ENCODE measurements at regions of chr1 and their contacts with region 1.

Region 1: DNA sequence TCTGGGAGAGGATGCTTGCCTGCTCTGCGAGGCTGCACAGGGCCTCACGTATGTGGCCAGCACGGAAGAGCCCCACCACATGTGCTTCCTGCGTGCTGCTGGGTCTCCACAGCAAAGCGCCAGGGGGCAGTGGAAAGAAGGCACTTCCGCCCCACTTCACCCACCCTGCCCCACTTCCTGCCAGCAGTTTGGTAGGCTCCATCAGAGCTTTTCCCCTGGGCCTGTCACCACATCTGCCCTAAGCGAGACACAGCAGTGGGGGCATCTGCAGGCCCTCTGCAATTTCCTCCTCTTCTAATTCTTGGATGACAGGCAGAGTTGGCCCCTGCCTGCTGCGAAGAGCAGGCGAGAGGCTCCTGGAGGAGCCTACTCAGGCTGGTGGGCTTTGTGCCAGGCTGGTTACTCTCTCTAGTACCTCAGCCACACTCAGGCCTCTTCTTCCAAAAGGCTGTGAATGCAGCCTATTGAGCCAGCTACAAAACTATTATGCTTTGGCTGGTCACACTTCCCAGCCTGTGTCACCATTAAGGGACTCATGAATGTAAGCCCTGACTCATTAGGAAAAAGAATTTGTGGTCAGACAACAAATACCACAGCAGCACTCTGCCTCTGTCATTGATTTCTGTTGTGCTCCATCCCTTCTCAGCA is 25.0 kb downstream of the CD244 start:
- DNase-seq: peak; percentile 96
- ATAC-seq: peak; percentile 93
- H3K4me3 Mint-ChIP-seq: peak overlapping the region; percentile 73
- H3K27ac Mint-ChIP-seq: peak overlapping the region; percentile 97
- H3K4me1 Mint-ChIP-seq: peaks cover 77% of the 10 kb centered on the region
- H3K27me3 Mint-ChIP-seq: no peaks in the 10 kb centered on the region

Region 2: DNA sequence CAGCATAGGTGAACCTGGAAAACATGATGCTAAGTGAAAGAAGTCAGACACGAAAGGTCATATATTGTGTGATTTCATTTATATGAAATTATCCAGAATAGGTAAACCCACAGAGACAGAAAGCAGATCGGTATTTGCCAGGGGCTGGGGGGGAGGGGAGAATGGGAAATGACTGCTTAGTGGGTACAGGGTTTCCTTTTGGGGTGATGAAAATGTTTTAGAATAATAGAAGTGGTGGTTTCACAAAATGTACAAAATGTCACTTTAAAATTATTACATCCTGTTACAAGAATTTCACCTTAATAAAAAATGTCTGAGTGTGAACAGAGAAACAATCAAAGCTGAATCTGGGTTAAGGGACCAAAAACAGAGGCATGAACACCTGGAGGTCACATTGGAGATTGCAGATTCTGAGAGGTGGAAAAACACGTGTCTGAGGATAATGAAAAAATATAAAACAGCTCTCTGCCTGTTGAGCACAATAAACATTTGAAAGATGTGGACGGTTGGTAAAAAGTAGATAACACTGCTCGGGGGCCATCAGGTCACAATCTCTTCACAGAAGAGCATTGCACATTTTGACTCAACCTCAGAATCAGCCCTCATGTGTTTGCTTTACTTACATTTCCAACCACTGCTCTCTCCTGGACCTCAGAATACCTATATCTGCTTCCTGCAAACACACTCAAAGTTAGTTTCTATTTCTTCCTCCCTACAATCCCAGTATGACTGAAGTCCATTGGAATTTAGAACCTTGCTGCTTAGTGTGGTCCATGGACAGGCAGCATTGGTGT is 317.8 kb before region 1 on chr1:
- CTCF ChIA-PET with region 1: no interaction called
- POLR2A ChIA-PET with region 1: no interaction called
- DNase-seq: peak; percentile 48
- ATAC-seq: peak; percentile 65
- H3K4me3 Mint-ChIP-seq: peak overlapping the region; percentile 83
- H3K27ac Mint-ChIP-seq: peak overlapping the region; percentile 93
- H3K4me1 Mint-ChIP-seq: peaks cover 90% of the 10 kb centered on the region
- H3K27me3 Mint-ChIP-seq: no peaks in the 10 kb centered on the region

Region 3: GRCh38 chr1:160711602-160712311 is 125.9 kb before region 1 on chr1 and contains the start of gene CD48:
- CTCF ChIA-PET with region 1: interaction called, 11 read pairs
- POLR2A ChIA-PET with region 1: interaction called, 5 read pairs
- DNase-seq: peak; percentile 79
- ATAC-seq: peak; percentile 48
- H3K4me3 Mint-ChIP-seq: no peak within 1 kb of the TSS
- H3K27ac Mint-ChIP-seq: no peak within 1 kb of the TSS
- H3K4me1 Mint-ChIP-seq: peaks cover 39% of the 10 kb centered on the region
- H3K27me3 Mint-ChIP-seq: no peaks in the 10 kb centered on the region
- total RNA-seq, gene CD48: 325 to 327 TPM

Region 4: GRCh38 chr1:160777486-160778089 is 60.1 kb before region 1 on chr1:
- CTCF ChIA-PET with region 1: interaction called, 75 read pairs
- POLR2A ChIA-PET with region 1: interaction called, 5 read pairs
- DNase-seq: peak; percentile 66
- ATAC-seq: peak; percentile 76
- H3K4me3 Mint-ChIP-seq: no peak overlapping the region
- H3K27ac Mint-ChIP-seq: peak overlapping the region; percentile 26
- H3K4me1 Mint-ChIP-seq: peaks cover 40% of the 10 kb centered on the region
- H3K27me3 Mint-ChIP-seq: no peaks in the 10 kb centered on the region

Region 5: DNA sequence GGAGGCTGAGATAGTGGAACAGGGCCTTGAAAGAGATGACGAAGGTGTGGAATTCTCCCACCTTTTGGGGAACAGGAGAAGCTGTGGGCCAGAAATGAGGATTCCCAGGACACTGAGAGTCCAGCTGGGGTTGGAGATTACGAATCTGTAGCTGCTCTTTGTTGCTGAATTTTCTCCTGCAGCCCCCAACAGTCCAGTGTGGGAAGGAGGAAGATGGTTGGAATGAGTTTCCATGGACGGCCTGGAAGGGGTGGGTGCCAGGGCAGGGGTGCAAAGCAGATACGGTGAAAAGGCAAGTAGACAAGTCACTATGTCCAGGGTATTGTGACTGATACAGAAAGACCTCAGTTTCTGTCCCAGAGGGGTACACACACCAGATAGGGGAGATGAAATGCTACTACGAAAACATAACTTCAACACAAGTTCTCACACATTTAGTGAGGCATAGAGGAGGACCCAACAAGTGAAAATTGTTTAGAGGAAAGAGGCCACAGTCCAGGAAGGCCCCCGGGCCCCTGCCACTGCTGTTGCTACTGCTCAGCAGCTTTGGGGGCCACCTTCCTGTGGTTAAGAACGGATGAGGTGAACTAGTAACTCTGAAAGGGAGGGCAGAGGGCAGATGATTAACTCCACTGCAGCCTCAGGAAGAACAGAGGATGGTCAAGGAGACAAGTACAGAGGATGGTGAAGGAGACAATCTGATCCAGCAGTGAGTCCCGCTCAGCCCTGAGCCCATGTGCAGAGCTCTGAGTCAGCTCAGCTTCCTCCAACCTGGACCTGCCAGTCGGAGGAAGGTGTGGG is 17.7 kb after region 1 on chr1:
- CTCF ChIA-PET with region 1: interaction called, 93 read pairs
- POLR2A ChIA-PET with region 1: interaction called, 22 read pairs
- DNase-seq: peak; percentile 71
- ATAC-seq: peak; percentile 77
- H3K4me3 Mint-ChIP-seq: no peak overlapping the region
- H3K27ac Mint-ChIP-seq: no peak overlapping the region
- H3K4me1 Mint-ChIP-seq: peaks cover 27% of the 10 kb centered on the region
- H3K27me3 Mint-ChIP-seq: no peaks in the 10 kb centered on the region

Region 6: DNA sequence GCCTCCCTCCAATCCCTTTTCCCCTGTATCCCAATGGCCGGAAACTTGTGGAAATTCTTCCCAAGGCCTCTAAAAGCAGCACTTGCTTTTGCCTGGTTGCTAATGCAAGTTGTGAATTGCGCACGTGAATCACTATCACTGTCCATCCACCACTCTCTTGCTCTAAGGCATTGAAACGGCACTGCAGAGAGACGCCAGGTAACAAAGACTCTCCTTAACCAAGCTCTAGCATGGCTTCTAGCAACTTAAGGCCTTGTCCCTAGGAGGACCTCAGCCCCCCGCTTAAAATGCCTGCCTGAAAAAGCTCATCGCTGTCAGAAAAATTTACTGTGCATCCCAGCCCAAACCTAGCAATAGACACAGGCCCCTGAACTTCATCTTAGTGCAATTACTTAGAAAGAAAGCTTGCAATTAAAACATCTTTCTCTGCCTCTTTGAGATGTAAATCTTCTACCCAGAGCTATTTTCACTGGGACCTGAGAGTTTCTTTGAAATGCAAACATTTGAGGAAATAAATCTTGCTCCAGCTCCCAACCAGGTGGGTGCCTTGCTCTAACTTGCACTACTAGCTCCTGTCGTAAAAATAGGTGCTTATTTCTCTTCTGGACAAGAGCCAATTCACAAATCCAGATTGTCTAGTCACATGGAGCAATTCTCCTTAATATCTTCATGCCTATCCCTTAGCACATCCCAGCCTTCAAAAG is 149.8 kb after region 1 on chr1:
- CTCF ChIA-PET with region 1: interaction called, 19 read pairs
- POLR2A ChIA-PET with region 1: interaction called, 5 read pairs
- DNase-seq: no peak
- ATAC-seq: no peak
- H3K4me3 Mint-ChIP-seq: no peak overlapping the region
- H3K27ac Mint-ChIP-seq: no peak overlapping the region
- H3K4me1 Mint-ChIP-seq: peaks cover 8% of the 10 kb centered on the region
- H3K27me3 Mint-ChIP-seq: peaks cover 1% of the 10 kb centered on the region

Measured in activated CD8-positive, alpha-beta T cell treated with anti-CD3 and anti-CD28 coated beads, Interleukin-2, amount 10 ng/mL, durations not matched to agents 7 days and 5 days (primary cell).